Activated T-helper 2 cell treated with anti-CD3 and anti-CD28 coated beads, Interferon-gamma antibody, Interleukin-2, Interleukin-4, amounts not matched to agents 10 μg/mL and 5 μg/mL and 100 μg/mL, durations not matched to agents 14 hours and 24 hours and 36 hours (primary cell): ENCODE measurements at regions of chrX and their contacts with region 1.

Region 1: DNA sequence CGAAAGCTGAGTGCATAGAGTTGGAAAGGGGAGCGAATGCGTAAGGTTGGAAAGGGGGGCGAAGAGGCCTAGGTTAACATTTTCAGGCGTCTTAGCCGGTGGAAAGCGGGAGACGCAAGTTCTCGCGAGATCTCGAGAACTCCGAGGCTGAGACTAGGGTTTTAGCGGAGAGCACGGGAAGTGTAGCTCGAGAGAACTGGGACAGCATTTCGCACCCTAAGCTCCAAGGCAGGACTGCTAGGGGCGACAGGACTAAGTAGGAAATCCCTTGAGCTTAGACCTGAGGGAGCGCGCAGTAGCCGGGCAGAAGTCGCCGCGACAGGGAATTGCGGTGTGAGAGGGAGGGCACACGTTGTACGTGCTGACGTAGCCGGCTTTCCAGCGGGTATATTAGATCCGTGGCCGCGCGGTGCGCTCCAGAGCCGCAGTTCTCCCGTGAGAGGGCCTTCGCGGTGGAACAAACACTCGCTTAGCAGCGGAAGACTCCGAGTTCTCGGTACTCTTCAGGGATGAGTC is at the start of gene DDX3X:
- DNase-seq: peak; percentile 81
- H3K4me3 Mint-ChIP-seq: peak within 1 kb of the TSS; percentile 97
- H3K27ac Mint-ChIP-seq: peak within 1 kb of the TSS; percentile 100
- H3K4me1 Mint-ChIP-seq: peaks cover 25% of the 10 kb centered on the region
- H3K27me3 Mint-ChIP-seq: no peaks in the 10 kb centered on the region
- total RNA-seq, gene DDX3X: 250 and 251 TPM in 2 replicates

Region 2: GRCh38 chrX:40735325-40736169 is 598.3 kb before region 1 on chrX and contains the start of gene MED14:
- intact Hi-C with region 1: loop called (anchors 10 kb)
- DNase-seq: peak; percentile 83
- H3K4me3 Mint-ChIP-seq: peak within 1 kb of the TSS; percentile 82
- H3K27ac Mint-ChIP-seq: peak within 1 kb of the TSS; percentile 91
- H3K4me1 Mint-ChIP-seq: peaks cover 29% of the 10 kb centered on the region
- H3K27me3 Mint-ChIP-seq: no peaks in the 10 kb centered on the region
- total RNA-seq, gene MED14: 37.8 and 44.7 TPM in 2 replicates

Region 3: DNA sequence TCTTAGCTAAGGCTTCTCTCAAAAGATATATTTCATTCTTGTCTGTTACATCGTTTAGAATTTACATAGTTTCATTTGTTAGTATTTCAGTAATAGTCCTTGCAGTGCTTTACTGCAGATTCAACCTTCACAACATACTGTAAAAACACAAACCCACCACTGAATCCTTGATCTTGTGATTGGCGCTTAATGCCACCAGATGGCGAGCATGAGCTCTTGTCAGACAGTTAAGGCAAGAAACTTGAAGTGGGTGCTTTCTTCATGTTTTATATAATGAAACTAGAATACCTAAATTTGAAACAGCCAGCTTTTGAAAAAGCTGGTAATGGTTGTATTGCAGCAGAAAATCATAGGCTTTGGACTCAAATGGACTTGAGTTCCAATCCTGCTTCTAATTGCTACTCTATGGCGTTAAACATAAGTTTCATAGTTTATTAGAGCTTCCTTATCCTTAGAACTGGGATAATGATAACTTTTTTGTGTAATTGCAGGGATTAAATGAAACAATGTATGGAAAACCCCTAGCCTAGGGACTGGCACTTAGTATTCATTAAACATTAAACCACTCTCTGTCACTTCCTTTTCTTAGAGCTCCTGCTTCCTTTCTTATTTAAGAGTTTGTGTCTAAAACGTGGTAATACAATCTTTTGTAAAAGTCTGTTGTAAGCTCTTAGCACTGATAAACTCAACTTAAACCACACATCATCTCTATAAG is 153.5 kb before region 1 on chrX:
- intact Hi-C with region 1: loop called (anchors 5 kb)
- DNase-seq: peak; percentile 28
- H3K4me3 Mint-ChIP-seq: no peak overlapping the region
- H3K27ac Mint-ChIP-seq: peak overlapping the region; percentile 43
- H3K4me1 Mint-ChIP-seq: peaks cover 25% of the 10 kb centered on the region
- H3K27me3 Mint-ChIP-seq: no peaks in the 10 kb centered on the region

Region 4: GRCh38 chrX:41350976-41351569 is 17.3 kb after region 1 on chrX:
- intact Hi-C with region 1: loop called (anchors 2 kb)
- DNase-seq: no peak
- H3K4me3 Mint-ChIP-seq: no peak overlapping the region
- H3K27ac Mint-ChIP-seq: peak overlapping the region; percentile 17
- H3K4me1 Mint-ChIP-seq: peaks cover 25% of the 10 kb centered on the region
- H3K27me3 Mint-ChIP-seq: no peaks in the 10 kb centered on the region

Region 5: GRCh38 chrX:41441934-41442823 is 108.4 kb after region 1 on chrX:
- intact Hi-C with region 1: loop called (anchors 1 kb)
- DNase-seq: peak; percentile 87
- H3K4me3 Mint-ChIP-seq: peak overlapping the region; percentile 62
- H3K27ac Mint-ChIP-seq: peak overlapping the region; percentile 89
- H3K4me1 Mint-ChIP-seq: peaks cover 9% of the 10 kb centered on the region
- H3K27me3 Mint-ChIP-seq: no peaks in the 10 kb centered on the region